ENCODE measurements at regions of chr11 and their contacts with region 1.

Region 1: DNA sequence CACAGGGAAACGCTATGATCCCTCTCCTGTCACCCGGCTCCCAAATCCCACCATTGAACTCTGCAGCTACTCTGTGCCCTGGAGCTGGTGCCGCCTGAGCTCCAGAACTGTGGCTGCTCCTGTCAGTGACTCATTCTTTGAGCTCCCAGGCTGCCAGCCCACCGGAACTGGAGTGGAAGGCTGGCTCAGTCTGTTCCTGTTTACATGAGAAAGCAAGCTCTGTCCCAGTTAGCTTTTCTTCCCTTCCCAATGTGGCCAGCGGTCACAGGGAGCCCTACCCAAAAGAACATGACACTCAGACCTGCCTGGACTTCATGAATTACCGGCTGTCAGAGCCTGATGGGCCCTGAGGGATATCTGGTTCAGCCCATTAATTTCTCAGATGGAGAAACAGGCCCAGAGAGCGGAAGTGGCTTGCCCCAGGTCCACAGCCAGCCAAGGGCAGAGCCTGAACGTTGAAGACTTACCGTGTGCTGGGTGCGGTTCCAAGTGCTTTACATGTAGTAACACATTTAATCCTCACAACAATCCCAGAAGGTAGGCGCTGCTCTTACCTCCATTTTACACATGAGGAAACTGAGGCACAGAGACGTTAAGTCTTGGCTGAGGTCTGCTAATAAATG is 23.8 kb upstream of the IGSF22 start:
- DNase-seq: no peak
- ATAC-seq: peak; percentile 73
- H3K4me3 ChIP-seq: no peak overlapping the region
- H3K27ac ChIP-seq: no peak overlapping the region
- H3K4me1 ChIP-seq: peaks cover 3% of the 10 kb centered on the region; the same call in 1 of the 2 replicates
- H3K27me3 ChIP-seq: no peaks in the 10 kb centered on the region
- CTCF ChIP-seq: no peak

Region 2: GRCh38 chr11:18368221-18368620 is 381.6 kb before region 1 on chr11:
- CTCF ChIA-PET with region 1: interaction called, 11 read pairs
- POLR2A ChIA-PET with region 1: no interaction called
- in situ Hi-C with region 1: no loop called
- intact Hi-C with region 1: no loop called
- DNase-seq: no peak
- ATAC-seq: 0 out of 2 replicates have a peak, but pooled peaks have one; percentile 47
- H3K4me3 ChIP-seq: no peak overlapping the region
- H3K27ac ChIP-seq: no peak overlapping the region
- H3K4me1 ChIP-seq: no peaks in the 10 kb centered on the region
- H3K27me3 ChIP-seq: no peaks in the 10 kb centered on the region
- CTCF ChIP-seq: no peak

Region 3: DNA sequence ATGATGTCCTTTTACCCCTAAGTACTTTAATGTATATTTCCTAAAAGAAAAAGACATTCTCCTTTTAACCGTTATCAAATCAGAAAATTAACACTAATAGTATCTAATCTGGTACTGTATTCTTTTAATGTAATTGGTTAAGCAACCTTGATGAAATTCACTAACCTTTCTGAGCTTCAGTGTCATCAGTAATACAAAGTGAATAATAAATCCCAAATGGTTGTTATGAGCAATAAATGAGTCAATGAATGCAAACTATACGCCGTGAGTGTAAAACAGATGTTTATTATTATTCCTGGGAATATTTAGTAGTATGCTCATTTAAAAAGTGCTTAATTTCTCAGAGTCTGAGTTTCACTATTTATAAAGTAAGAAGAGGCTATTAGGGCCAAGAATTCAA is 182.7 kb before region 1 on chr11:
- CTCF ChIA-PET with region 1: no interaction called
- POLR2A ChIA-PET with region 1: interaction called, 11 read pairs
- in situ Hi-C with region 1: no loop called
- intact Hi-C with region 1: no loop called
- DNase-seq: no peak
- ATAC-seq: no peak
- H3K4me3 ChIP-seq: no peak overlapping the region
- H3K27ac ChIP-seq: no peak overlapping the region
- H3K4me1 ChIP-seq: no peaks in the 10 kb centered on the region
- H3K27me3 ChIP-seq: no peaks in the 10 kb centered on the region
- CTCF ChIP-seq: no peak